Left cardiac atrium (tissue), 4 donors: ENCODE measurements at regions of chr15 and their contacts with region 1.

Region 1: GRCh38 chr15:25933456-25934158 is 70.5 kb upstream of the ATP10A start:
- DNase-seq: peak; percentile 87
- ATAC-seq: peak; percentile 95 to 98

Region 2: GRCh38 chr15:25508369-25509002 is 425.1 kb before region 1 on chr15:
- intact Hi-C with region 1: loop called (anchors 5 to 10 kb)
- DNase-seq: no peak
- ATAC-seq: peak in 1 of 2 donors; percentile 45

Region 3: GRCh38 chr15:25693321-25694237 is 240.0 kb before region 1 on chr15:
- intact Hi-C with region 1: loop called (anchors 5 kb)
- DNase-seq: no peak
- ATAC-seq: peak; percentile 39 to 51

Region 4: DNA sequence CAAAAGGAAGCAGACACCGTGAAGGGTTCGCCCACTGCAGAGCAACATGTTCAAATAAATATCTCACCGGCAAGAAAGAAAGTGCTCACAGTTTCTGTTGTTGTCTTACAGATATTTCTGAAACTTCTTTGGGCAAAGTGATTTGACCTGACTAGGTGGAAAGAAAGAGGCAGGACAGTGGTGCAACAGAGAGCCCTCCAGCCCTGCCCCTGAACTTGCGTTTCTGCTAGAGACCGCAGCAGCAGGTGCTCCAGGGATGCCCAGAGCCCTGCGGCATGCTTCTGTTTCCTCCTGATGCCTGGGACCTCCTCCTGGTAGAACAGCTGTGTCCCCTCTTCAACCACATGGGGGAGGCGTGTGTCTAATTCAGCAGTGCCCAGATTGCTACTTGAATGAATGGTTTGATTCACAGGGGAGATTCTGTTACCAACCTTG is 193.9 kb before region 1 on chr15:
- intact Hi-C with region 1: loop called in 1 of 2 experiments (anchors 10 kb)
- DNase-seq: no peak
- ATAC-seq: no peak

Region 5: DNA sequence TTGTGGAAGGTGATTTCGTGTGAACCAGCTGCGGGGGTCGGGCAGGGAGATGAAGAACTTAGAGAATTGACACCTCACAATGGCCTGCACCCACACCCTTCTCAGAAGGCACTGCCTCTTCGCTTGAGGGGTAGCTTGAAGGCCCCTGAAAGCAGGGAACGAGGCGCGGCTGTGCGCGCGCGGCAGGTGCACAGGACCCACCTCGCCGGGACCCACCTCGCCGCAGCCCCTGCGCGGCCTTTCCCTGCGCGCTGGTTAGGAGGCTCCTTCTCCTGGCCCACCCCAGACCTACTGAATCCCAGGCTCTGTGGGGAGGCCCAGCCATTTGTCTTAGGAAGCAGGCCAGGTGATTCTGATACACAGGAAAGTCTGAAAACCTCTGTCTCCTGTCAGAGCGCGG is 24.3 kb before region 1 on chr15:
- intact Hi-C with region 1: no loop called
- DNase-seq: no peak
- ATAC-seq: no peak